Activated CD4-positive, alpha-beta T cell treated with anti-CD3 and anti-CD28 coated beads, Interleukin-2, amount 10 ng/mL, durations not matched to agents 24 days and 14 days (primary cell): ENCODE measurements at regions of chr2 and their contacts with region 1.

Region 1: GRCh38 chr2:23532391-23533337 is 147.7 kb downstream of the KLHL29 start:
- DNase-seq: peak; percentile 85
- H3K4me3 Mint-ChIP-seq: peak overlapping the region; percentile 85
- H3K27ac Mint-ChIP-seq: peak overlapping the region; percentile 94
- H3K4me1 Mint-ChIP-seq: peaks cover 38% of the 10 kb centered on the region
- H3K27me3 Mint-ChIP-seq: no peaks in the 10 kb centered on the region

Region 2: DNA sequence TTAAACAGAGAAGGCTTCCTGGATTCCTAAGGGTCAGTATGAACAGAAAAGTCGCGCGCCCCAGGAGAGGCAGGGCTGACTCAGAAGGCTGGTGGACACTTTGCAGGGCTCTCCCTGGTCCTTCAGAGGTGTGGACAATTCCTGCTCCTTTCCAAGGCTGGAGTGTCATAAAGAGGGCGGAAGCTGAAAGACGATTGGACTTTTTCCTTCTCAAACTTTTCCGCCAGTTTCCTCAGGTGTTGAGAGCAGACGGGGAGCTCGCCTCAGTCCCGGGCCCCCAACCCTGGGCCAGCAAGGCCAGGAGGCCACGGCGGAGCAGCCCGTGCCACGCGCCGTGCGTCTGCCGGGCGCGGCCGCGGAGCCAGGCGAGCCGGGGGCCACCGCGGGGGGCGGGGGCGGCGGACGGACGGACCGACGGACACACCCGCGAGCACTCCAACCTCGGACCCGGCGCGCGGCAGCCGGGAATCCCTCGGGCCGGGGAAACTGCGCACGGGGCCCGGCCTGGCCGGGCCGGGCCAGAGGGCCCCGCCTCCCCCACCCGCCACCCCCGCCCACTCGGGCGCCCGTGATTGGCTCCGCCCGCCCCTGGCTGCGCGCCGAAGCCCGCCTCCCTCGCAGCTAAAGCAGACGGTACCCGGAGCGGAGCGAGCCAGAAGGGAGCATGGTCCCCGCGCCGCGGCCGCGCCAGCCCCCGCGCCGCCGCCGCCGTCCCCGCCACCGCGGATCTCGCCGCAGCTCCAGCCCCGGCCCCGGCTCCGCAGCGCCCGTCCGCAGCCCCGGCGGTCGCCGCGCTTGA is 147.9 kb before region 1 on chr2 and contains the start of gene KLHL29:
- intact Hi-C with region 1: loop called (anchors 2 kb)
- DNase-seq: peak; percentile 93
- H3K4me3 Mint-ChIP-seq: peak within 1 kb of the TSS; percentile 85
- H3K27ac Mint-ChIP-seq: peak within 1 kb of the TSS; percentile 79
- H3K4me1 Mint-ChIP-seq: peaks cover 26% of the 10 kb centered on the region
- H3K27me3 Mint-ChIP-seq: peaks cover 68% of the 10 kb centered on the region
- total RNA-seq, gene KLHL29: 3.7 and 3.8 TPM in 2 replicates

Region 3: GRCh38 chr2:23480991-23481827 is 51.5 kb before region 1 on chr2:
- intact Hi-C with region 1: no loop called
- DNase-seq: no peak
- H3K4me3 Mint-ChIP-seq: no peak overlapping the region
- H3K27ac Mint-ChIP-seq: no peak overlapping the region
- H3K4me1 Mint-ChIP-seq: peaks cover 3% of the 10 kb centered on the region
- H3K27me3 Mint-ChIP-seq: peaks cover 16% of the 10 kb centered on the region

Region 4: DNA sequence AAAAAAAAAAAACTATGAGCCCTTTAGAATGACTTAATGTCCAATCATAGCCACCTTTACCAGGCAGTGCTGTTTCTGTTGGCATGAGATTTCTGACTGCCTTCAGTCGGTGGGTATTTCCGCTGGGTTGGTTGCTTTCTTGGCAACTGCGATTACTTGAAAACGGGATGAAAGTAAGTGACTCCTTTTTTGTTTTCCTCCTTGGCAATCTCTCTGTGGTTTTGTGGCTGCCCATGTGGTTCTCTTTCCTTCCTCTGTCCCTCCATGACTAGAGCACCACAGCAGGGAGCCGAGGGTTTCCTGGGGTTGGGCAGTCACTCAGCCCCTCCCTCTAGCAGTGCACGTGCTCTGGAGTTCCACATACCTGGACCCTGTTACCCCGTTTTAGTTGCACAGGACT is 35.6 kb before region 1 on chr2:
- intact Hi-C with region 1: loop called (anchors 2 kb)
- DNase-seq: peak; percentile 82
- H3K4me3 Mint-ChIP-seq: peak overlapping the region; percentile 61
- H3K27ac Mint-ChIP-seq: peak overlapping the region; percentile 74
- H3K4me1 Mint-ChIP-seq: peaks cover 34% of the 10 kb centered on the region
- H3K27me3 Mint-ChIP-seq: peaks cover 15% of the 10 kb centered on the region

Region 5: DNA sequence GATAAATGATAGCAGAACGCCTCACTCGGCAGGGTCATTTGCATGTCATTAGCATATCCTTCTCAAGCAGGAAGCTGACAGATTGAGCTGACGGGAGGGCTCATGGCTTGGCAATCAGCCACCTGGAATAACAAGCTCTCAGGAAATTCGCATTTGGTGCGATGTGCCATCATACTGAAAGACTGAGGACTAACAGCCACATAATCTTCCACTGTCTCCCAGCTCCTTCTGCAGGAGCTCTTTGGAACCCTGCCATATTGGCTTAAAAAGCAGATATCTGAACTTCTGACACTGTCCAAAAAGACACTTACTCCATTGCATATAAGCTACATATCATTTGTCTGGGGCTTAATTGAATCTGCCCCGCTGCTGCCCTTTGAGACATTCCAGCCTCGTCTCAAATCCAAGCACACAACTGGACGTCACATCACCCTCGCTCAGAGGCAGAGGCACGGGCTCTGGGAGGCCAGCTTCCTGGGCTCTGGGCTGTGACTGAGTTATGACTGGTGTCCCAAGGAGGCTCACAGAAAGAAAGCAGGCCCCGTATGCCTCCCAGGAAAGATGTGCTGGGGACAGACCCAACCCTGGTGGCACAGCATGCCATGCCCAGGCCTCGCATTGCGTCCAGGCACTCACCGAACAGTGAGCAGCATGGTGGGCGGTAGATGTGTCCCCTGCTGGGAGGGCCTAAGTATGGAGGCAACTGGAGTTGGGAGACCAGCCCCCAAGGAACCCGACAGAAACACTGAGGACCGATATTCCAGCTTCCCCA is 166.2 kb after region 1 on chr2:
- intact Hi-C with region 1: no loop called
- DNase-seq: no peak
- H3K4me3 Mint-ChIP-seq: no peak overlapping the region
- H3K27ac Mint-ChIP-seq: no peak overlapping the region
- H3K4me1 Mint-ChIP-seq: no peaks in the 10 kb centered on the region
- H3K27me3 Mint-ChIP-seq: no peaks in the 10 kb centered on the region